Right ventricle myocardium inferior (tissue), 1 donor: ENCODE measurements at regions of chr12 and their contacts with region 1.

Region 1: DNA sequence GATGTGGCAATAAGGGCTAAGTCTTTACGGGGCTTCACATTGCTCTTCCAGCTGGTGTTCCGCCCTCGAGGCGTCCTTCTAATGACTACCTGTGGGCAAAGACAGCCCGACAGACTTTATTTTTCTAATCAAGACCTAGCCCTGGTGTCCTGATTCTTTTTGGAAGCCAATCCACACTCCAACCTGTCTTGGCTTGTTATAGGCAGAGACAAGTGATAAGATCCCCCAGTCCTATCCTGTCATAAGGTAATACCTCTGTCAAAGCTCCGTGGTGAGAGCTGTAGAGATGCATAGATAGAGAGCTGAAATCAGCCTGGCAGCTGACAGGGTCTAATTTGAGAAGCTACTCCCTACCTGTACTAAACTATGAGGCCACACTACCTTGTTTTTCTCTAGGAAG is 11.5 kb upstream of the WNK1 start:
- DNase-seq: no peak
- ATAC-seq: no peak

Region 2: GRCh38 chr12:690466-690865 is 50.4 kb before region 1 on chr12:
- intact Hi-C with region 1: loop called (anchors 5 kb)
- DNase-seq: no peak
- ATAC-seq: no peak